ENCODE measurements at regions of chr1 and their contacts with region 1.

Region 1: GRCh38 chr1:19468397-19468956 is 16.9 kb downstream of the CAPZB start:
- DNase-seq: peak in 1 of 2 experiments; percentile 48
- H3K4me3 ChIP-seq: no peak overlapping the region
- H3K27ac ChIP-seq: no peak overlapping the region
- H3K4me1 ChIP-seq: peaks cover 16% of the 10 kb centered on the region
- H3K27me3 ChIP-seq: no peaks in the 10 kb centered on the region
- CTCF ChIP-seq: no peak

Region 2: GRCh38 chr1:19430121-19431068 is 38.1 kb before region 1 on chr1:
- CTCF ChIA-PET with region 1: no interaction called
- POLR2A ChIA-PET with region 1: interaction called, 4 read pairs
- intact Hi-C with region 1: loop called (anchors 1 kb)
- DNase-seq: peak; percentile 33 to 88
- H3K4me3 ChIP-seq: no peak overlapping the region
- H3K27ac ChIP-seq: peak overlapping the region; percentile 47
- H3K4me1 ChIP-seq: peaks cover 19% of the 10 kb centered on the region
- H3K27me3 ChIP-seq: no peaks in the 10 kb centered on the region
- CTCF ChIP-seq: no peak

Region 3: GRCh38 chr1:19439464-19440171 is 28.9 kb before region 1 on chr1:
- CTCF ChIA-PET with region 1: no interaction called
- POLR2A ChIA-PET with region 1: interaction called, 6 read pairs
- intact Hi-C with region 1: loop called (anchors 2 kb)
- DNase-seq: no peak
- H3K4me3 ChIP-seq: no peak overlapping the region
- H3K27ac ChIP-seq: no peak overlapping the region
- H3K4me1 ChIP-seq: peaks cover 14% of the 10 kb centered on the region
- H3K27me3 ChIP-seq: no peaks in the 10 kb centered on the region
- CTCF ChIP-seq: no peak